Naive thymus-derived CD8-positive, alpha-beta T cell (primary cell): ENCODE measurements at regions of chr17 and their contacts with region 1.

Region 1: DNA sequence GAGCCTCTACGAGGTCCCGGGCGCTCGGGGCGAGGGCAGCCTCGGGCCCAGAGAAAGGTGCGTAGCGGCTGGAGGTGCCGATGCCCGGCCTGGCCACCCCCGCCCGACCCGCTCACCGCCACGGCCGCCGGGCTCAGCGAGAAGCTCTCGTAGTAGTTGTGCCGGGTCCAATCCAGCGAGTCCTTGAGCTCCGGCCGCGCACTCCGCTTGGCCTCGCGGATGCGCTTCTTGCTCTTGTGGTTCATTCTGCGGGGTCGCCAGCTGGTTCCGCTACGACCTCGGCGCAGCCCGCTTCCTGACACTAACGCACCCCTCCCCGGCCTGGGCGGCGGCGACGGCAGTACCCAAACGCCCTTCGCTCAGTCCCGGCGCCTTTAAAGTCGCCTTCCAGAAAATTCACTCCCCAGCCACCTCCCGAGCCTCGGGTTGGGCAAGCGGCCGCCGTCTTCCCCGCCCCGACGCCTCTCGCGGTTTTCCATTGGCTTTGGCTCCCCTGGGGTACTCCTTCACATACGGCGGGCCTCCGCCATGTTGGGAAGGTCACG is at the start of gene JMJD6:
- DNase-seq: peak in 5 of 10 donors; percentile 91 to 97 (median 94)
- ATAC-seq: peak; percentile 81 to 85
- H3K4me3 Mint-ChIP-seq: peak within 1 kb of the TSS; percentile 91 to 99 (median 97)
- H3K27ac Mint-ChIP-seq: peak within 1 kb of the TSS; percentile 91 to 99 (median 98)
- H3K4me1 Mint-ChIP-seq: peaks cover 13 to 75% (median 59%) of the 10 kb centered on the region in 4 donors
- H3K27me3 Mint-ChIP-seq: no peaks in the 10 kb centered on the region
- polyA plus RNA-seq, gene JMJD6: 10.2 to 34.2 (median 14.4) TPM

Region 2: GRCh38 chr17:76671123-76671911 is 55.0 kb before region 1 on chr17:
- POLR2A ChIA-PET with region 1: interaction called, 13 read pairs
- DNase-seq: peak; percentile 92 to 100 (median 98)
- ATAC-seq: peak; percentile 95 to 98
- H3K4me3 Mint-ChIP-seq: peak overlapping the region; percentile 86 to 97 (median 93)
- H3K27ac Mint-ChIP-seq: peak overlapping the region; percentile 95 to 99 (median 98)
- H3K4me1 Mint-ChIP-seq: peaks cover 20 to 54% (median 42%) of the 10 kb centered on the region in 4 donors
- H3K27me3 Mint-ChIP-seq: peaks cover 0 to 1% (median 0%) of the 10 kb centered on the region in 5 donors

Region 3: GRCh38 chr17:76681222-76682137 is 44.8 kb before region 1 on chr17:
- POLR2A ChIA-PET with region 1: no interaction called
- DNase-seq: peak; percentile 61 to 88 (median 75)
- ATAC-seq: peak; percentile 76 to 80
- H3K4me3 Mint-ChIP-seq: peak overlapping the region in 3 of 10 donors; percentile 2 to 78 (median 75)
- H3K27ac Mint-ChIP-seq: peak overlapping the region in 6 of 10 donors; percentile 16 to 86 (median 73)
- H3K4me1 Mint-ChIP-seq: peaks cover 5 to 15% (median 11%) of the 10 kb centered on the region in 4 donors
- H3K27me3 Mint-ChIP-seq: no peaks in the 10 kb centered on the region

Region 4: GRCh38 chr17:76714822-76715495 is 11.3 kb before region 1 on chr17:
- POLR2A ChIA-PET with region 1: interaction called, 40 read pairs
- DNase-seq: peak; percentile 45 to 86 (median 73)
- ATAC-seq: peak; percentile 3 to 4
- H3K4me3 Mint-ChIP-seq: peak overlapping the region; percentile 25 to 72 (median 62)
- H3K27ac Mint-ChIP-seq: peak overlapping the region; percentile 87 to 99 (median 96)
- H3K4me1 Mint-ChIP-seq: peaks cover 24 to 55% (median 49%) of the 10 kb centered on the region in 4 donors
- H3K27me3 Mint-ChIP-seq: no peaks in the 10 kb centered on the region

Region 5: GRCh38 chr17:76753061-76753961 is 27.0 kb after region 1 on chr17:
- POLR2A ChIA-PET with region 1: interaction called, 23 read pairs
- DNase-seq: peak in 9 of 10 donors; percentile 23 to 92 (median 71)
- ATAC-seq: peak; percentile 90 to 94
- H3K4me3 Mint-ChIP-seq: peak overlapping the region; percentile 84 to 96 (median 90)
- H3K27ac Mint-ChIP-seq: peak overlapping the region; percentile 90 to 100 (median 99)
- H3K4me1 Mint-ChIP-seq: peaks cover 14 to 25% (median 24%) of the 10 kb centered on the region in 4 donors
- H3K27me3 Mint-ChIP-seq: no peaks in the 10 kb centered on the region